Prostate gland (tissue), 2 donors: ENCODE measurements at regions of chr1 and their contacts with region 1.

Region 1: GRCh38 chr1:227787513-227788270 is 27.8 kb upstream of the PRSS38 start:
- DNase-seq: peak; percentile 94
- H3K4me3 ChIP-seq: peak overlapping the region; percentile 39 to 53
- H3K27ac ChIP-seq: peak overlapping the region; percentile 78 to 79
- H3K4me1 ChIP-seq: peaks cover 11% of the 10 kb centered on the region
- H3K27me3 ChIP-seq: no peaks in the 10 kb centered on the region
- CTCF ChIP-seq: no peak
- POLR2A ChIP-seq: peak; percentile 78

Region 2: GRCh38 chr1:227844320-227845146 is 56.8 kb after region 1 on chr1:
- intact Hi-C with region 1: no loop called
- DNase-seq: no peak
- H3K4me3 ChIP-seq: no peak overlapping the region
- H3K27ac ChIP-seq: no peak overlapping the region
- H3K4me1 ChIP-seq: no peaks in the 10 kb centered on the region
- H3K27me3 ChIP-seq: no peaks in the 10 kb centered on the region
- CTCF ChIP-seq: no peak
- POLR2A ChIP-seq: no peak

Region 3: GRCh38 chr1:227855687-227856086 is 68.0 kb after region 1 on chr1:
- intact Hi-C with region 1: no loop called
- DNase-seq: no peak
- H3K4me3 ChIP-seq: no peak overlapping the region
- H3K27ac ChIP-seq: no peak overlapping the region
- H3K4me1 ChIP-seq: no peaks in the 10 kb centered on the region
- H3K27me3 ChIP-seq: no peaks in the 10 kb centered on the region
- CTCF ChIP-seq: no peak
- POLR2A ChIP-seq: no peak

Region 4: GRCh38 chr1:227886993-227887696 is 99.5 kb after region 1 on chr1:
- intact Hi-C with region 1: loop called (anchors 5 kb)
- DNase-seq: peak; percentile 10
- H3K4me3 ChIP-seq: peak overlapping the region; percentile 31 to 47
- H3K27ac ChIP-seq: peak overlapping the region; percentile 78 to 85
- H3K4me1 ChIP-seq: peaks cover 8% of the 10 kb centered on the region
- H3K27me3 ChIP-seq: no peaks in the 10 kb centered on the region
- CTCF ChIP-seq: no peak
- POLR2A ChIP-seq: no peak